ENCODE measurements at regions of chr16 and their contacts with region 1.

Region 1: GRCh38 chr16:78503602-78504001 is 404.1 kb downstream of the WWOX start:
- DNase-seq: peak; percentile 61 to 91
- H3K4me3 ChIP-seq: no peak overlapping the region
- H3K27ac ChIP-seq: no peak overlapping the region
- H3K4me1 ChIP-seq: peaks cover 0 to 32% (median 17%) of the 10 kb centered on the region in 4 donors
- H3K27me3 ChIP-seq: no peaks in the 10 kb centered on the region
- CTCF ChIP-seq: peak in 6 of 7 experiments; percentile 8 to 92 (median 80)
- EP300 ChIP-seq: no peak
- POLR2A ChIP-seq: no peak

Region 2: DNA sequence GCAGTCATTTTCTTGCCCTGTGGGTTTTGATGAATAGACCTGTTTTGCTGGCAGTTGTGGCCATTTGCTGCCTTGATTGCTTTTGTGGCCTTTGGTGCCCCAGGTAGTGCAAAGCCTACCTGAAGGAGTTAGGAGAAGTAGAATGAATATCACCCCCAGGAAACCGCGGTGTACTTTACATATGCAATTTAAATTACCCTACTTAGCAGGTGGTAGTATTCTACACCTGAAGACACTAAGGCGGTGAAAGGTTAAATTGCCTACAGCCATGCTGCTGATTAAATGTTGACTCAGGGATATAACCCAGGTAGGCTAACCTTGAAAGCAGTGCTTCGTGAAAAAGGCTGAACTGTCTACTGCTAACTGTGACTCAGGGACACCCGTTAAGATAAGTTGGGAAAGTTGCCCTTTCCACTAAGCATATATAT is 431.3 kb before region 1 on chr16:
- intact Hi-C with region 1: no loop called
- DNase-seq: peak in 1 of 2 donors; percentile 59
- H3K4me3 ChIP-seq: no peak overlapping the region
- H3K27ac ChIP-seq: no peak overlapping the region
- H3K4me1 ChIP-seq: no peaks in the 10 kb centered on the region
- H3K27me3 ChIP-seq: peaks cover 0 to 6% (median 0%) of the 10 kb centered on the region in 3 donors
- CTCF ChIP-seq: no peak
- EP300 ChIP-seq: no peak
- POLR2A ChIP-seq: no peak

Region 3: DNA sequence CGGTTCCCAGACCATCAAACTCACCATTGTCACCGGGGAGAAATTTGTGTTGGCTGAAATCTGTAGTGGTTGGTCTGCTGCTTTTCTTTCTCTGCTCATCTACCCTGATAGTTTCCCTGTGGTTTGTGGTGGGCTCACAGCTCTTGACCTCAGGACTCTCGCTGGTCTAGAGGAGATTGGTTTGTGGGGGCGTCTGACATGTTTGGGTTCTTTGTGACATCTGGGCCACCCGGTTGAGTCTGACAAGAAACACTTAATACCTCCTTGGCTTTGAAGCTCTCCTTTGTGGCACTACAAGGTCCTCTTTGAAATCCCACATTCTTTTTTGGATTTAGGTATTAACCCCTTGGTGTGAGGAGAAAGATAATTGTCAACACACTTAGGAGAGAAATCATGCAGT is 257.8 kb after region 1 on chr16:
- intact Hi-C with region 1: loop called (anchors 10 kb)
- DNase-seq: no peak
- H3K4me3 ChIP-seq: no peak overlapping the region
- H3K27ac ChIP-seq: no peak overlapping the region
- H3K4me1 ChIP-seq: no peaks in the 10 kb centered on the region
- H3K27me3 ChIP-seq: no peaks in the 10 kb centered on the region
- CTCF ChIP-seq: no peak
- EP300 ChIP-seq: no peak
- POLR2A ChIP-seq: no peak

Region 4: GRCh38 chr16:79601931-79602627 is 1098.5 kb after region 1 on chr16:
- intact Hi-C with region 1: loop called (anchors 10 kb)
- DNase-seq: peak; percentile 86 to 95
- H3K4me3 ChIP-seq: peak overlapping the region; percentile 81 to 89 (median 82)
- H3K27ac ChIP-seq: peak overlapping the region; percentile 94 to 99 (median 96)
- H3K4me1 ChIP-seq: peaks cover 9 to 26% (median 10%) of the 10 kb centered on the region in 4 donors
- H3K27me3 ChIP-seq: no peaks in the 10 kb centered on the region
- CTCF ChIP-seq: peak in 5 of 7 experiments; percentile 51 to 85 (median 78)
- EP300 ChIP-seq: no peak
- POLR2A ChIP-seq: no peak